Vagina (tissue), 2 donors: ENCODE measurements at regions of chr11 and their contacts with region 1.

Region 1: DNA sequence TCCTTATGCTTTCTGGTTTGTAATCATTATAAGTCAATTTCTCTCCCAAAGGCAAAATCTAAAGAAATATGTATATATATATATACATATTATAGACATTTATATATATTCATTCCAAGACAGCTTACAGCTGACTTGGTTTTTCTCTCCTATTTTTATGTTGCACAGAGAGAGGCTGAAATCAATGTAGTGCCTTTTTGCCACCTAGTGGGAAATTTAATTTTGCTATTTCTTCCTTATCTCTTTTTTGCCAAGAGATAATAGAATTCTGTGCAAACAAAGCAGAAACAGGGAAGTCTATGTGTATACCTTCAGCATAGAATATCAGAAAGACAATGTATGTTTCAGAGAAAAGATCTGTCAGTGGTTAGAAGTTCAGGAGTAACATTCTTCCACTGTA is 186.0 kb upstream of the ANO5 start:
- DNase-seq: no peak
- H3K4me3 ChIP-seq: no peak overlapping the region
- H3K27ac ChIP-seq: no peak overlapping the region
- H3K4me1 ChIP-seq: no peaks in the 10 kb centered on the region
- H3K27me3 ChIP-seq: no peaks in the 10 kb centered on the region
- CTCF ChIP-seq: no peak
- POLR2A ChIP-seq: no peak

Region 2: DNA sequence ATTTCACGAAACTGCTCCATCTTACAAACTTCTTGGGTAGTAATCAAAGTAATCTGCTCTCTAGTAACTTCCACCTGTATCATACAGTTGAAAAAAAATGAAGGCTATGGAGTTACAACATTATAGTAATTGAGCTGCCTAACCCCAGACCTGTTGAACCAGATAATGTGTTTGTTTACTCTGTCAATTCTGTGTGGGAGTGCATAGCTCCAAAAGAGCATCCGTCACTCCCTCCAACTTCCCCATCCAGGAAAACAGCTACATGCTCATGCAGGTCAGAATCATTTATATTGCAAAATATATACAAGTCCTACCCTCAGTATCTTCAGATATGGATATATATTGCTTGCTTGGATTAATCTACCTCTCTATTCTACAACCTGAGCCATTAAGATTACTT is 58.0 kb before region 1 on chr11:
- intact Hi-C with region 1: no loop called
- DNase-seq: no peak
- H3K4me3 ChIP-seq: no peak overlapping the region
- H3K27ac ChIP-seq: no peak overlapping the region
- H3K4me1 ChIP-seq: no peaks in the 10 kb centered on the region
- H3K27me3 ChIP-seq: no peaks in the 10 kb centered on the region
- CTCF ChIP-seq: no peak
- POLR2A ChIP-seq: no peak

Region 3: GRCh38 chr11:21963013-21963412 is 43.9 kb before region 1 on chr11:
- intact Hi-C with region 1: loop called (anchors 1 kb)
- DNase-seq: no peak
- H3K4me3 ChIP-seq: no peak overlapping the region
- H3K27ac ChIP-seq: no peak overlapping the region
- H3K4me1 ChIP-seq: no peaks in the 10 kb centered on the region
- H3K27me3 ChIP-seq: no peaks in the 10 kb centered on the region
- CTCF ChIP-seq: no peak
- POLR2A ChIP-seq: no peak

Region 4: GRCh38 chr11:22157531-22158200 is 150.8 kb after region 1 on chr11:
- intact Hi-C with region 1: no loop called
- DNase-seq: no peak
- H3K4me3 ChIP-seq: no peak overlapping the region
- H3K27ac ChIP-seq: no peak overlapping the region
- H3K4me1 ChIP-seq: no peaks in the 10 kb centered on the region
- H3K27me3 ChIP-seq: no peaks in the 10 kb centered on the region
- CTCF ChIP-seq: no peak
- POLR2A ChIP-seq: no peak